Activated CD4-positive, alpha-beta T cell treated with anti-CD3 and anti-CD28 coated beads for 36 hours (primary cell): ENCODE measurements at regions of chr5 and their contacts with region 1.

Region 1: GRCh38 chr5:392431-392988 is 50.5 kb upstream of the EXOC3 start:
- DNase-seq: peak; percentile 95
- ATAC-seq: peak; percentile 95
- H3K4me3 Mint-ChIP-seq: peak overlapping the region; percentile 73
- H3K27ac Mint-ChIP-seq: peak overlapping the region; percentile 97
- H3K4me1 Mint-ChIP-seq: peaks cover 32% of the 10 kb centered on the region
- H3K27me3 Mint-ChIP-seq: no peaks in the 10 kb centered on the region

Region 2: DNA sequence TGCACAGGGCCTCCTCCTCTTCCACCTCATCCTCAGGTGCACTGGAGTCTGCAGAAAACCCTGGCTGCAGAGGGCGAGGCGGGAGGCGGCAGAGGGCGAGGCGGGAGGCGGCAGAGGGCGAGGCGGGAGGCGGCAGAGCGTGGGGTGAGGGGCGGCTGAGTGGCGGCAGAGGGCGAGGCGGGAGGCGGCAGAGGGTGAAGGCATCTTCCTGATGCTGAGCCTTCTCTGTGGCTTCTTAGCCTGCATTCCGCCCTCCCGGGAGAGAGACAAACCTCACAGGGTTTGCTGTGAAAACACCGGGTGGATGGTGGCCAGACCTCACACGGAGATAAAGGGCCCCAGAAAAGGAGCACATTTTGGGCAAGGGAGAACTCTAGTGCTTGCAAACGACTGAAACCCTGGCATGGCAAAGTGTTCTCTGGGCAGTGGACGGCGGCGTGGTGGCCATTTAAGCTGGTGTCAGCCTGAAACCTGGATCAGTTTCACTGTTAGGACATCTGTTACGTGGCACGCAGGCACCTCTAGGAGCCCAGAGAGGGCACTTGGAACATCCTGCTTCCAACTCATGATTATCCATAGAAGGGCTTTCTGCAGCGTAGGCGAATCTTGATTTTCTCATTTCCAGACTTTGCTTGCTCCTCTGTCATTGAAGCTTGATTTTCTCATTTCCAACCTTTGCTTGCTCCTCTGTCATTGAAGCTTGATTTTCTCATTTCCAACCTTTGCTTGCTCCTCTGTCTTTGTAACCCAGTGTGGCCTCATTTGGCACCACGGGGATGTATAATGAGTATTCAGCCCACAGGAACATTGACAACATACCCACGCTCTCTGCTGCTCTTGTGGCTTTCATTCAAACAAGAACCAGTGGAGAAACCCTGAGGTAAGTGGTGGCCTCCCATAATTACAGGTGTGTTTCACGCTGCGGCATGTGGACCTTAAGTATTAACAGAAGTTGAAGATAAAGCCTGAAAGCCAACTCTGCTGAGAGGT is 316.9 kb before region 1 on chr5:
- CTCF ChIA-PET with region 1: no interaction called
- POLR2A ChIA-PET with region 1: no interaction called
- intact Hi-C with region 1: no loop called
- DNase-seq: no peak
- ATAC-seq: no peak
- H3K4me3 Mint-ChIP-seq: no peak overlapping the region
- H3K27ac Mint-ChIP-seq: no peak overlapping the region
- H3K4me1 Mint-ChIP-seq: no peaks in the 10 kb centered on the region
- H3K27me3 Mint-ChIP-seq: peaks cover 3% of the 10 kb centered on the region

Region 3: DNA sequence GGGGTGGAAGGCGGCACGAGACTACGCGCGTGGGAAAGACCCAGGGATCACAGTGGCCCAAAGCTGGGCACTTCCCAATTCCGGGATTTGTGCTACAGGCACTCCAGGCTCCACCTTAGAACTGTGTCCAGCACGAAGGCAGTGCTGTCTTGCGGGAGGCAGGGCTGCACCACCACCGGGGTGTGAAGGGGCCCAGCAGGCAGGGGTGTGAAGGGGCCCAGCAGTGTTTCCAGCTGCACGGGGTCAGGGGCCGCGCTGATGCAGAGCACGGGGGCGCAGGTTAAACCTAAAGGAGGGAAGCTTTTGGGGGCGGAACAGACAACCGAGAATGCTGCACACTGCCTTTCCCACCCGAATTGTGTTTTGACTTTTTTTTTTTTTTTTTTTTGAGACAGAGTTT is 122.2 kb before region 1 on chr5:
- CTCF ChIA-PET with region 1: no interaction called
- POLR2A ChIA-PET with region 1: no interaction called
- intact Hi-C with region 1: loop called in 1 of 2 experiments (anchors 1 kb)
- DNase-seq: no peak
- ATAC-seq: no peak
- H3K4me3 Mint-ChIP-seq: peak overlapping the region; percentile 95
- H3K27ac Mint-ChIP-seq: peak overlapping the region; percentile 47
- H3K4me1 Mint-ChIP-seq: peaks cover 41% of the 10 kb centered on the region
- H3K27me3 Mint-ChIP-seq: no peaks in the 10 kb centered on the region

Region 4: GRCh38 chr5:334903-335739 is 57.4 kb before region 1 on chr5:
- CTCF ChIA-PET with region 1: no interaction called
- POLR2A ChIA-PET with region 1: no interaction called
- intact Hi-C with region 1: loop called (anchors 1 kb)
- DNase-seq: no peak
- ATAC-seq: no peak
- H3K4me3 Mint-ChIP-seq: peak overlapping the region; percentile 55
- H3K27ac Mint-ChIP-seq: peak overlapping the region; percentile 92
- H3K4me1 Mint-ChIP-seq: peaks cover 46% of the 10 kb centered on the region
- H3K27me3 Mint-ChIP-seq: peaks cover 4% of the 10 kb centered on the region

Region 5: GRCh38 chr5:373710-374602 is 18.6 kb before region 1 on chr5:
- CTCF ChIA-PET with region 1: interaction called, 6 read pairs
- POLR2A ChIA-PET with region 1: interaction called, 8 read pairs
- intact Hi-C with region 1: loop called (anchors 1 kb)
- DNase-seq: peak; percentile 88
- ATAC-seq: peak; percentile 37
- H3K4me3 Mint-ChIP-seq: peak overlapping the region; percentile 62
- H3K27ac Mint-ChIP-seq: peak overlapping the region; percentile 94
- H3K4me1 Mint-ChIP-seq: peaks cover 69% of the 10 kb centered on the region
- H3K27me3 Mint-ChIP-seq: no peaks in the 10 kb centered on the region

Region 6: DNA sequence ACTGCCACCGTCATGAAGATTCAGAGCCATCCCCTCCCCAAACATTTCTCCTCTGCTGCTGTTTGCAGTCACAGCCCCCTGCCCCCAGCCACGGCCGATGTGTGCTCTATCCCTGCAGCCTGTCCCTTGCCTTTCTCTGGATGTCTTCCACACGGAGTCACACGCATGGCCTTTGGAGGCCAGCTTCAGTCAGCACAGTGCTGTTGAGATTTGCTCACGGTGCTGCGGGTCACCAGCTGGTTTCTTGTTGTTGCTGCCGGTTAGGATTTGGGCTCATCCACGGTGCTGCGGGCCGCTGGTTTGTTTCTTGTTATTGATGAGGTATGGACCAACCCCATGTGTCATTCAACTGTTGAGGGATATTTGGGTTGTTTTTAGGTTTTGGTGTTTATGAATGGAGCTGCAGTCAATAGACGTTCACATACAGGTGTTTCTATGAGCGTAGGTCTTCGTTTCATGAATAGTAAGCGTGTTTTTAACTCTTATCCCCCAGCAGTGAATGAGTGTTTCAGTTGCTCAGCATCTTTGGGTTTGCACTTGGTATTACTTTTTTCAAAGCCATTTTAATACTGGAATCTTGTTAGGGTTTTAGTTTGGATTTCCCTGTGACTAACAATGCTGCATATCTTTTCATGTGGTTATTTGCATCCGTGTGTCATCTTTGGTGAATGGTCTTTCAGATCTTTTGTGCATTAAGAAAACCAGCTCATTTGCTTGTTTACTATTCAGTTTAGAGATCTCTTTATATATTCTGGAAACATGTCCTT is 13.4 kb before region 1 on chr5:
- CTCF ChIA-PET with region 1: interaction called, 6 read pairs
- POLR2A ChIA-PET with region 1: interaction called, 8 read pairs
- intact Hi-C with region 1: loop called (anchors 1 kb)
- DNase-seq: peak; percentile 30
- ATAC-seq: peak; percentile 60
- H3K4me3 Mint-ChIP-seq: peak overlapping the region; percentile 55
- H3K27ac Mint-ChIP-seq: peak overlapping the region; percentile 94
- H3K4me1 Mint-ChIP-seq: peaks cover 68% of the 10 kb centered on the region
- H3K27me3 Mint-ChIP-seq: no peaks in the 10 kb centered on the region

Region 7: DNA sequence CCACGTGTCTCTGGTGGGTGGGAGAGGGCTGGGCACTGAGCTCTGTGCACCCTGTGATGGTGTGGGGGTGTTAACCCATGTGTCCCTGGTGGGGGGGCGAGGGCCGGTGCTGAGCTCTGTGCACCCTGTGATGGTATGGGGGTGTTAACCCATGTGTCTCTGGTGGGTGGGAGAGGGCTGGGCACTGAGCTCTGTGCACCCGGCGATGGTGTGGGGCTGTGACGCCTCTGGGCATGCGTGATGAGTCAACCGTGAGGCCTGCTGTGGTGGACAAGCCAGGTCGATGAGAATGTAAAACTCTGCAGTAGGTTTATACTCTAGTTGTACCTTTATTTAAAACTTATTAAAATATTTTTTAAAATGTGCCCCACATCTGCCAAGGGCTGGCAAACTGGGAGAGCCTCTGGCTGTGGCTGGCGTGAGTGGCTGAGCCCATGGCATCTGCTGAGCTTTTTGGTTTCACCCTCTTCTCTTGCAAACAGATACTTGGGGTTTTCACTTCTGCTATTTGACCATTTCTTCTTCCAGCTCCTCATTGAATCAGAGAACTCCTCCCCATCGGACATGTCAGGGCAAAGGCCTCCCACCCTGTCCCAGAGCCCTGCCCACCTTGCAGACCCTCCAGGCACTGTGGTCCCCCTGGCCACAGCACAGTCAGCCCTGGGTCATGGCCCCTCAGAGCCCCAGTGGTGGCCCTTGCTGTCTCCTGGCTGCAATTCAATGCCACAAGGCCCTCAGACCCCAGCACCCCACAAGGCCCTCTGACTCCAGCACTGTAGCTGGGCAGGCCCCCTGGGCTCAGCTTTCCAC is 32.0 kb after region 1 on chr5:
- CTCF ChIA-PET with region 1: no interaction called
- POLR2A ChIA-PET with region 1: no interaction called
- intact Hi-C with region 1: no loop called
- DNase-seq: no peak
- ATAC-seq: no peak
- H3K4me3 Mint-ChIP-seq: no peak overlapping the region
- H3K27ac Mint-ChIP-seq: no peak overlapping the region
- H3K4me1 Mint-ChIP-seq: no peaks in the 10 kb centered on the region
- H3K27me3 Mint-ChIP-seq: peaks cover 6% of the 10 kb centered on the region

Region 8: DNA sequence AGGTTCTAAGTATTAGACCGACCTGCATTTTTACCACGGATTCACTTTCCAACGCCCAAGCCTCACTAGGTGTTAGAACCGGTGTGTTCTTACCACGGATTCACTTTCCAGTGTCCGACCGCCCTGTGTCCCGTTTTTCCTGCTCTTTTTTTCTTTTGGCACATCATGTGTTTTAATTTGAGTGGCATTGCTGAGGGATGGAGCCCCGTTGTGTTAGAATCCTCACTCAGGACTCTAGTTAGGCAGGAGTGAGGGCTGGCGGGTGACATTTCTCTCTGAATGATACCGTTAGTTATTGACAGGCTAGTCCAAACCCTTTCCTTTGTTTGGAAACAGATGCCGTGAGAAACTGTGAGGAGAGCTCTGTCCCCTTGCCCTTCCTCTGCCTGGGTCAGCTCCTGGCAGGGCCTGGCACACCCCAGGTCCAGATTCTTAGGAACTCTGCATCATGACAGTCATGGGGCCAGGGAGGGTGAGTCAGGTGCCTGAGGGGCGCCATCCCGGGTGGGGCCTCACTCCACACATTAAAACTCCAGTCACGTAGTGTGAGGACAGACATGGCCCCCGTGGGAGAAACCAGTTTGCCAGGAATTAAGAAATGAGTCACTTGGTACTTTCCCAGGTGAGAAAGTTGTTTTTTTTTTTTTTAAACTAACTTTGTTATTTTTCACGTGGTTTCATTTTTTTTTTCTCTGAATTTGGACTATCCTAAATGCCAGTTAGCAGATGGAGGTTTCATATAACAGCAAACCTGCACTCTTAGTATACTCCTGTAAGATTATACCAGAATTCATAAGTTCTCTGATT is 66.2 kb after region 1 on chr5:
- CTCF ChIA-PET with region 1: no interaction called
- POLR2A ChIA-PET with region 1: no interaction called
- intact Hi-C with region 1: loop called in 1 of 2 experiments (anchors 5 kb)
- DNase-seq: peak; percentile 84
- ATAC-seq: peak; percentile 92
- H3K4me3 Mint-ChIP-seq: peak overlapping the region; percentile 40
- H3K27ac Mint-ChIP-seq: peak overlapping the region; percentile 97
- H3K4me1 Mint-ChIP-seq: peaks cover 72% of the 10 kb centered on the region
- H3K27me3 Mint-ChIP-seq: no peaks in the 10 kb centered on the region